PC-9 (cell line): ENCODE measurements at regions of chr2 and their contacts with region 1.

Region 1: DNA sequence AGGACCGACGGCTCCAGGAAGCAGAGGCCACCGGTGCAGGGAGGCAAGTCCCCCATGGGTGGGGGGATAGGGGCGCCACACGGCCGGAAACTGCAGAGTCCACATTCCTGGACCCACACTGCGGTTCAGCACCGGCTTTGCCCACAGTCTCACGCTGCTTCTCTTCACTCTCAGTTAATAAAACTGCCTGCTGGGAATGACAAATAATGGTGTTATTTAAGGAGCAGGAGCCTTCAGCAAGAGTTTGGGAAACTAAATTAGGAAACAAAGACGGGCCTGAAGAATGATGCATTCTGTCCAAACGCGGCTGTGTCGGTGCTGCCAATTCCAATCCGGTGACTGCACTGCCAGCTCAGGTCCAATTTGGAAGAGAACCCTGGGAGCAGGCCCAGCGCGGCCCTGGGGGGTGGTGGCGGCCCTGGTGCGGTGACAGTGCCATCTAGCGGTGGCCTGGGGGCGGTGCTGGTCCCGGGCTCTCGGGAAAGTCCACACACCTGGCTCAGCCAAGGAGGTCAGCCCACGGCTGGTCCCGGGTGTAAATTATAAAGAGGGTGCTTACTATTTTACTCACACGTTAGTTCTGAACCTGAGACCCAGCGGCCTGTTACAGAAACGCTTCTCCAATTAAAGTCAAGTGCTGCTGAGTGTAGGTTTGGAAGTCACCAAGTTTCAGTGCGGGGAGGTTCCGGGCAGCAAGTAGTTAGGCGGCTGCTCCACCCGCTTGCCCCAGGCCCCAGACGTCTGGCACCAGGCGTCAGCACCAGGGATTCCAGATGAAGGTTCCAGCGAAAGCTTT is 73.1 kb upstream of the PXDN start:
- DNase-seq: peak in 1 of 2 experiments; percentile 64
- H3K4me3 ChIP-seq: no peak overlapping the region
- H3K27ac ChIP-seq: no peak overlapping the region
- H3K4me1 ChIP-seq: no peaks in the 10 kb centered on the region
- H3K27me3 ChIP-seq: peaks cover 49% of the 10 kb centered on the region
- CTCF ChIP-seq: peak; percentile 98

Region 2: GRCh38 chr2:1478311-1479305 is 338.8 kb before region 1 on chr2:
- CTCF ChIA-PET with region 1: no interaction called
- POLR2A ChIA-PET with region 1: no interaction called
- intact Hi-C with region 1: no loop called
- DNase-seq: no peak
- H3K4me3 ChIP-seq: no peak overlapping the region
- H3K27ac ChIP-seq: no peak overlapping the region
- H3K4me1 ChIP-seq: no peaks in the 10 kb centered on the region
- H3K27me3 ChIP-seq: peaks cover 89% of the 10 kb centered on the region
- CTCF ChIP-seq: no peak

Region 3: DNA sequence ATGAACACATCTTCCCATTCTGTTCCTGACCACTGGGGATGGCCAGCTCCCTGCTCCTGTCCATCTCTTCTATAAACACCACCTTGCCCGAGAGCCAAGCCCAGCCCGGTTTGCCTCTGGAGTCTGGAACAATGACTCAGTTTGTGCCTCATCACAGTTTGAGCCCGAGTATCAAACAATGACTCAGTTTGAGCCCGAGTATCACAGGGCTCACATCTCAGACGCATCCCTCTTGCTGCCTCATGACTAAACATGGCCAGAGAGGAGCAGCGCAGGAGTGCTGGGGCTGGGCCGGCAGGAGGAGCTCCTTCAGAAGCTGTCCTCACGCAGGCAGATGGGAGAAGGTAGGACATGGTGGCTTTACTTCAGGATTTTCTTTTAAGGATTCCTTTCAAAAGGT is 141.8 kb before region 1 on chr2:
- CTCF ChIA-PET with region 1: no interaction called
- POLR2A ChIA-PET with region 1: no interaction called
- intact Hi-C with region 1: loop called (anchors 5 kb)
- DNase-seq: peak; percentile 62 to 87
- H3K4me3 ChIP-seq: no peak overlapping the region
- H3K27ac ChIP-seq: peak overlapping the region; percentile 59
- H3K4me1 ChIP-seq: peaks cover 5% of the 10 kb centered on the region
- H3K27me3 ChIP-seq: peaks cover 15% of the 10 kb centered on the region; the same call in 1 of the 2 replicates
- CTCF ChIP-seq: peak; percentile 57

Region 4: DNA sequence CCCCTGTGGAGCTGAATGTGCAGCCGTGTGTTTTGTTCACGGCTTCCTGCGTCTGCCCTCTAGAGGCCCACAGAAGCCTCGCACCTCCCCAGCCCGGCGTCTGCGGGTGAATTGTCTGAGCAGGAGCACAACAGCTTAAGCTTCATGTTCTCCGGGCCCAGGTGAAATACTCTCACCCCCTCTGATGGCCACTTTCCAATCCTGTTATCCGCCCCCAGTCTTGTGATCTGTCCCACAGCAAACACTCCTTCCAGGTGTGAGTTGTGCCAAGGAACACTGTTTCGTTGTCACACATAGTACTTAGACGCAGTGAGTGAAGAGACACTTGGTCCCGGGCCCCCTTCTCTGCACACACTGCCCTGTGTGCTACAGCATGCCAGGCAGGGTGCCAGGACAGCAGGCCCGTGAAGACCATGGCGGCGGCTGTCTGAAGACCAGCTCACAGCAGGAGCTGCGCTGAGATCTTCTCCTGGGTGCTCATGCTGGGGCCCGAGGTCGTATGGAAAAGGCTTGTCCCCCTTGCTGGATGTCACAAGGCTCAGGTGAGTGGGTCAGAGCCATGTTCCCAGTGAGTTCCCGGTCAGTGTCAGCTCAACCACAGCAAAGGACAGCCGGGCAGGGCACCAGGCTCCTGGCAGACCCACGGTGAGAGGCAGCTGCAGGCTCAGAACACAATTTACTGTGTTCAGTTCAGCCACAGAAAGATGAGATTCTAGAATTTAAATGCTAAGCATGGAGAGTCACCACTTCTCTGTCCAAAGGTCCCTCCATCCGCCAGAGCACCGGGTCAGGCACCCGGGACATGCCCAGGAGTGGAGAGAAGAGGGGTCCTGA is 66.3 kb before region 1 on chr2:
- CTCF ChIA-PET with region 1: no interaction called
- POLR2A ChIA-PET with region 1: no interaction called
- intact Hi-C with region 1: loop called (anchors 1 kb)
- DNase-seq: peak; percentile 58 to 60
- H3K4me3 ChIP-seq: no peak overlapping the region
- H3K27ac ChIP-seq: no peak overlapping the region
- H3K4me1 ChIP-seq: 0 out of 2 replicates have a peak, but pooled peaks cover 6% of the 10 kb centered on the region
- H3K27me3 ChIP-seq: peaks cover 11% of the 10 kb centered on the region
- CTCF ChIP-seq: peak; percentile 77